Right cardiac atrium (tissue), 5 donors: ENCODE measurements at regions of chr11 and their contacts with region 1.

Region 1: DNA sequence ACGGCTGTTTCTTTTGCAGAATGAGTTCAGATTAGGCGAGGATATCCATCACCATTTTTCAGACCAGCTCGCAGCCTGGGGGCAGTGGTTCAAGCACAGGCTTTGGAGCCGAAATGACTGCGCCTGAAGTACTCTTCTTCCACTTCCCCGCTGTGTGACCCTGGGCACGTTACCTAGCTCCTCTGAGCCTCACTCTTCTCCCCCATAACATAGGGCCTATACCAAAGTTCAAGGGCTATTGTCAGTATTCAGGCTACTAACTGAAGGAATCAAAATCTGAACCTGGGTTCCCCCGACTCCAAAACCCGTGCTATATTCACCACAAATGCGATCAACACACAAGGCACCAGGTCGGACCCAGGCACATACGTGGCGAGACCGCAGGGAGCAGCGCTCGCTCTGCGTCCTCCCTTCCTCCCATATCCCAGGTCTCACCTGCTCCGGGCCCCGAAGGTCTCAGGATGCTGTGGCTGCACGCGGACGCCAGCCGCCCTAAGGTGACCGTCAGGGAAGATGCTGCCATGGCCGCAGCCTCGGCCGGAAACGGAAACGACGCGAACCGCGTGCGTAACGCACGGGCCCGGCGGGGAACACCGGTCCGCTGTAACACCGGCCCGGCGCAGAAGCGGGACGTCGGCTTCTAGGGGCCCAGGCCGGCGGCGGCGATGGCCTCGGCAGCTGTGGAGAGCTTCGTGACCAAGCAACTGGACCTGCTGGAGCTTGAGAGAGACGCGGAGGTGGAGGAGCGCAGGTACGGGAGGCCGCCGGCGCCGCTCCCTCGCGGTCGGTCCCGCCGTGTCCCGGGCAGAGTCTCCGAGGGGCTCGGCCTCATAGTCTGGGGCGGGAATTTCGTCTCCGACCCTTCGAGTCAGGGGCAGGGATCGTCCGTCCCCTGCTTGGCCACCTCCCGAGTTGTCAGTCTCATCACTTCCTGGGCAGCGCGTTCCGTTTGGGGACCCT is at the starts of genes IGHMBP2 and MRPL21:
- DNase-seq: peak; percentile 85 to 94 (median 93)
- ATAC-seq: peak; percentile 97 to 98
- H3K4me3 ChIP-seq: peak within 1 kb of the TSS; percentile 92
- H3K27ac ChIP-seq: peak within 1 kb of the TSS; percentile 77
- H3K4me1 ChIP-seq: peaks cover 3% of the 10 kb centered on the region
- H3K27me3 ChIP-seq: no peaks in the 10 kb centered on the region
- total RNA-seq, gene IGHMBP2: 11.1 to 12.7 (median 11.9) TPM
- total RNA-seq, gene MRPL21: 57.3 to 85.5 (median 80.0) TPM

Region 2: GRCh38 chr11:69048718-69049489 is 145.3 kb after region 1 on chr11 and contains the start of gene TPCN2:
- intact Hi-C with region 1: loop called in 2 of 4 experiments (anchors 10 kb)
- DNase-seq: peak; percentile 95 to 98 (median 98)
- ATAC-seq: peak; percentile 96 to 97
- H3K4me3 ChIP-seq: peak within 1 kb of the TSS; percentile 96
- H3K27ac ChIP-seq: peak within 1 kb of the TSS; percentile 61
- H3K4me1 ChIP-seq: peaks cover 5% of the 10 kb centered on the region
- H3K27me3 ChIP-seq: no peaks in the 10 kb centered on the region
- total RNA-seq, gene TPCN2: 7.2 to 11.1 (median 9.0) TPM

Region 3: DNA sequence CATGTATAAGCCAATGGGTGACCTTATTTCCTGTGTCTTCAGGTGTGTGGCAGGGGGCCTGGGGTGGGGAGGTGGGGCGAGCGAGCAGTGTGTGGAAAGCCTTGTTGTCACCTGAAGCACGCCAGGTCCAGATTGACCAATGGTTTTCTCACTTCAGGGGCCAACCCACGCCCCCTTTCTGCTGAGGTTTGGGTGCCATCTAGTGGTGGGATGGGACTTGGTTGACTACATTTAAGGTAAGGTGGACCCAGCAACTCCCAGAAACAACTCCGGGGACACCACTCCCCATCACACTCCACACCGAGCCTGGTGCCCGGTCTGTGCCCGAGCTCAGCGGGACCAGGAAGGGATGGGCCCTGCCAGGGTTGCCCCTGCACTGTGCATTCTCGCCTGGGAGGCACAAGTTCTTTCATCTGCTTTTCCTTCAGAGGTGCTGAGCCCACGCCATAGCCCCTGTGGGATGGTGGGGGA is 185.1 kb after region 1 on chr11:
- intact Hi-C with region 1: loop called in 1 of 4 experiments (anchors 10 kb)
- DNase-seq: peak; percentile 66 to 82 (median 79)
- ATAC-seq: peak; percentile 50 to 63
- H3K4me3 ChIP-seq: no peak overlapping the region
- H3K27ac ChIP-seq: no peak overlapping the region
- H3K4me1 ChIP-seq: no peaks in the 10 kb centered on the region
- H3K27me3 ChIP-seq: no peaks in the 10 kb centered on the region